ENCODE measurements at regions of chr15 and their contacts with region 1.

Region 1: DNA sequence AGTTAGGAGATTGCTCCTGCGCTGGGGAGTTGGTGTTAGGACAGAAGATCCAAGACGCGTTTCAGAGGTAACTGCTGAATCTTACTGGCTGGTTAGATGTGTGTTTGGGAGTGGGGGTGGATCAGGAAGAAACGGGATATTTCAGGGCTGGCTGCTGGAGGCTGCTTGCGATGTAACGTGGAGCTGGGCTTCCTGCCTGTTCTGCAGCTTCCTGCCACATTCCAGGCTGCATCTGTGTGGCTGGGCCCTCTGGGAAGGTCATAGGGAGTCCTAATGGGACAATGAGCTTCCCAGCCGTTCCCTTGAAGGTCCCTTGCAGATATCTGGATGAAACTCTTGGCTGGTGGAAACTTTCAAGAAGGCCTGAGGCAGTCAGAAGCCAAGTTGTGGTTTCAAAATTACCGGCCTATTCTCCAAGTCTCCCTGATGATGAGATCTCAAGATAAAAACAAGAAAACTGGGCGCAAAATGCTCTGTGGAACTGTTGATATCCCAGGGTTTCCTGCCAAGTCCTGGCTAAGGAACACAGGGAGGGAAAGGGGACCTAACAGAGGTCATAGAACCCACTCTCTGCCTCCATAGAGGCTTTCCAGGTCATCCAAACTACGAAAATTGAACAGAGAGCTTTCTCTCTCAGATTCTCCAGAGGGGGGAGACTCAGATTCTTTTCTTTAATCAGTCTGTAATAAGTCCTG is 67.0 kb downstream of the NOX5 start:
- DNase-seq: peak in 1 of 2 donors; percentile 73
- ATAC-seq: peak; percentile 79
- H3K4me3 ChIP-seq: no peak overlapping the region
- H3K27ac ChIP-seq: peak overlapping the region in 1 of 2 donors; percentile 27
- H3K4me1 ChIP-seq: no peaks in the 10 kb centered on the region
- H3K27me3 ChIP-seq: no peaks in the 10 kb centered on the region

Region 2: GRCh38 chr15:69035205-69035917 is 46.1 kb before region 1 on chr15:
- intact Hi-C with region 1: loop called in 1 of 2 experiments (anchors 5 kb)
- DNase-seq: no peak
- ATAC-seq: no peak
- H3K4me3 ChIP-seq: no peak overlapping the region
- H3K27ac ChIP-seq: no peak overlapping the region
- H3K4me1 ChIP-seq: no peaks in the 10 kb centered on the region
- H3K27me3 ChIP-seq: no peaks in the 10 kb centered on the region

Region 3: DNA sequence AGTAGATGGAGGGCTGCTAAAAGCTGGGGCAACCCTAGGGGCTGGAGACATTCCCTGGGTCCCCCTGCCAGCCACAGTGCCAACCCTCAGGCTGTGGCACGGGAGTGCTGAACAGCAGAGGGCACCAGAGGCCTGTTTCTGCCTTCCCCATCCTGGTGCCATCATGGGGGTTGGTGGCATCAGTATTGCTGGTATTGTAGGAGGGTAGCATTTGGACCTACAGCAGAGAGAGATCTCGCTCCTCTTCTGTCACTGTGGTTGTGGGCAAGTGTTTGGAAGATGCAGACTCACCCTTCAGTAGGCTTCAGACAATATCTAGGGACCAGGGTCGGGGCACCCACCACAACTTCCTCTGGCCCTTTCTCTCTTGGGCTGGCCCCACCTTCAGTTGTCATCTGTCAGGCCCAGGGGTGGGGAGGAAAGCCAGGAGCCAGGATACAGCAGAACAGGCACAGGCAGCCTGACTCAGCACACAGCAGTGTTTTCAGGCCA is 494.6 kb after region 1 on chr15:
- intact Hi-C with region 1: no loop called
- DNase-seq: peak; percentile 79 to 86
- ATAC-seq: peak; percentile 79
- H3K4me3 ChIP-seq: no peak overlapping the region
- H3K27ac ChIP-seq: no peak overlapping the region
- H3K4me1 ChIP-seq: no peaks in the 10 kb centered on the region
- H3K27me3 ChIP-seq: no peaks in the 10 kb centered on the region

Measured in aorta (tissue), 5 donors.